ENCODE measurements at regions of chr11 and their contacts with region 1.

Region 1: DNA sequence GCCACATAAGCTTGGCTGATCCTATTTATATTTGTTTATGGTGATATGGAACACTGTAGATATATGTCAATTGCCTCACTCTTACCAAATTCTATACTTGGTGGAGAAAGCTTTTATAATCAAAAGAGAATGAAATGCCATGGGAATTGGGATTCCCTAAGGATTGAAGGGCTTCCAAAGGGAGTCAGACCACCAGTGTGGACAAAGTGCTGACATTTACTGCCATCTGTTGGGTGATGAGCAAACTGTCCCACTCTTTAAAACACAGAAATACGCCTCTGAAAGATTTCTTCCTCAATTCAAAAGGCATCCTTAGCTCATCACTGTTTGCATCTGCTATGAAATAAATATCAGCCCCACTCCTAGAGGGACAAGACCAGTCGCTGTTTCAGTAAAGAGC is 7.1 kb downstream of the SLC1A2 start:
- DNase-seq: peak; percentile 63
- H3K4me3 ChIP-seq: no peak overlapping the region; a peak in 1 of 4 replicates
- H3K27ac ChIP-seq: no peak overlapping the region
- H3K4me1 ChIP-seq: no peaks in the 10 kb centered on the region
- H3K27me3 ChIP-seq: peaks cover 31% of the 10 kb centered on the region; the same call in 1 of the 2 replicates
- CTCF ChIP-seq: peak; percentile 62
- EP300 ChIP-seq: no peak
- RAD21 ChIP-seq: peak; percentile 75

Region 2: DNA sequence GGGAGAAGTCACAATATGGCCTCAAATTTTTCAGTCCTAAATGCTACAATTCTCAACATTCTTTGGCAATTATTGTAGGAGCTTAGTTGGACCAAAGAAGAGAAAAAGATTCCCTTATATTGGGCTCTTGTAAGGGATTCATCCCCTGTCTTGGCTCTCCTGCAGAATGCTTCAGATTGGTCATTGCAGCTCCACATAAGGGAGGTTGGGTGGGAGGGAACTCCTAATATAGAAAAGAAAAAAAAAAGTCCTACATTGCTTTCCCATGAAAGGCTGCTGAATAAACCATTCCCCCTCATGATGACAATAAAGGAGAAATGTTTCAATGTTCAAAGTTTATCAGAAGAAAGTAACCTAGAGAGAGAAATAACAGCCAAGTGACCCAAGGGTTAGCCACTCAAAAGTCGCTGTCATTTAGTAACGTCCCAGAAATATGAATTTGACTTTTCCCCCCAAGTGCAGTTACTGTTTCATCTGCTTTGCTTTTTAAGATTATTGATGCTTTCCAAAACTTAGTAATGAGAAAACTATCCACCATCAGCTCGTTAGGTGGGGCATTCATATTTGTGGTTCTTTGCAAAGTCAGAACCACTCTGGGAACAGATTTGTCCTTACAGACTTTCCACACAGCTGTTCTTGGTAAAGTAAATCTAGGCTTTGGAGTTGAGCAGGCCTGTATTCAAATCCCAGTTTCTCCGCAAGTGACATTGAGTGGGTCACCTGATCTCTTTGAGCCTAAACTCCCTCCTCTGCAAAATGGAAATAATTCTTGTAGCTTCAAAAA is 12.1 kb after region 1 on chr11:
- CTCF ChIA-PET with region 1: interaction called, 10 read pairs
- POLR2A ChIA-PET with region 1: no interaction called
- DNase-seq: no peak
- H3K4me3 ChIP-seq: no peak overlapping the region
- H3K27ac ChIP-seq: no peak overlapping the region
- H3K4me1 ChIP-seq: peaks cover 0 to 8% of the 10 kb centered on the region in 2 experiments; a peak in 1 of 4 replicates
- H3K27me3 ChIP-seq: peaks cover 65% of the 10 kb centered on the region
- CTCF ChIP-seq: no peak
- EP300 ChIP-seq: no peak
- RAD21 ChIP-seq: no peak